ENCODE measurements at regions of chr3 and their contacts with region 1.

Region 1: GRCh38 chr3:112519424-112520001 is 20.2 kb upstream of the BTLA start:
- DNase-seq: no peak
- ATAC-seq: peak; percentile 85

Region 2: GRCh38 chr3:112293368-112294321 is 225.9 kb before region 1 on chr3 and contains the start of gene SLC9C1:
- intact Hi-C with region 1: loop called (anchors 5 kb)
- DNase-seq: peak; percentile 56
- ATAC-seq: peak; percentile 94
- total RNA-seq, gene SLC9C1: 0.94 TPM

Region 3: DNA sequence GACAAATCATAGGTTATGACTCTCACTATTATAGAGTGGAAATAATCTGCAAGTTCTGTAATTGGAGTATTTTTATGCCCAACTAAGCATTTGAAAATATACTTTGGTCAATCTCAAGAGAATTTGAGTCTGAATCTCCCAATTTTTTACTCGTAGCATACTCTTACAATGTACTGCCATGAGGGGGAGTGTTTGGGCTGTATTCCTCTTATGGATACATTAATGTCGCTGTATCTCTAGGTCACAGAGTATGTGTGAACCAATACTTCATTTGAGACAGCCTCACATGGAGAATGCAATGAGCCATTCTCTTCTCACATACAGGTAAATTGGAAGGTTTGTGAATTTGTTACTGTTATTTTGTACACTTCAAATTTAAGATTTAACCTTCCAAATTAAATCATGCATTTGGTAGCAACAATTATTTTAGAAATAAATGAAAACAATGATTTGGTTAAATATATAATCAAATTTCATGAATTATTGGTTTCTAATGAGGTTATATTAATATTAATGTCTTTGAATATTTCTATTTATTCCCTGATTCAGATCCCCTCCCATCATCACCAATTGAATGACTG is 192.1 kb before region 1 on chr3:
- intact Hi-C with region 1: loop called (anchors 10 kb)
- DNase-seq: no peak
- ATAC-seq: peak; percentile 90

Region 4: GRCh38 chr3:112464264-112464663 is 55.2 kb before region 1 on chr3:
- intact Hi-C with region 1: no loop called
- DNase-seq: no peak
- ATAC-seq: no peak

Region 5: GRCh38 chr3:112847692-112848091 is 328.2 kb after region 1 on chr3:
- intact Hi-C with region 1: no loop called
- DNase-seq: no peak
- ATAC-seq: no peak